Common myeloid progenitor, CD34-positive (primary cell): ENCODE measurements at regions of chr2 and their contacts with region 1.

Region 1: GRCh38 chr2:69565431-69565839 is 78.1 kb downstream of the AAK1 start:
- DNase-seq: peak; percentile 61 to 66 (median 64)
- H3K4me3 ChIP-seq: no peak overlapping the region
- H3K27ac ChIP-seq: no peak overlapping the region
- H3K4me1 ChIP-seq: peaks cover 3 to 16% (median 10%) of the 10 kb centered on the region in 4 experiments
- H3K27me3 ChIP-seq: no peaks in the 10 kb centered on the region

Region 2: GRCh38 chr2:69222953-69223658 is 342.3 kb before region 1 on chr2:
- CTCF ChIA-PET with region 1: no interaction called
- POLR2A ChIA-PET with region 1: no interaction called
- DNase-seq: no peak
- H3K4me3 ChIP-seq: no peak overlapping the region
- H3K27ac ChIP-seq: no peak overlapping the region
- H3K4me1 ChIP-seq: peaks cover 0 to 6% (median 0%) of the 10 kb centered on the region in 4 experiments
- H3K27me3 ChIP-seq: peaks cover 0 to 2% (median 0%) of the 10 kb centered on the region in 5 experiments

Region 3: DNA sequence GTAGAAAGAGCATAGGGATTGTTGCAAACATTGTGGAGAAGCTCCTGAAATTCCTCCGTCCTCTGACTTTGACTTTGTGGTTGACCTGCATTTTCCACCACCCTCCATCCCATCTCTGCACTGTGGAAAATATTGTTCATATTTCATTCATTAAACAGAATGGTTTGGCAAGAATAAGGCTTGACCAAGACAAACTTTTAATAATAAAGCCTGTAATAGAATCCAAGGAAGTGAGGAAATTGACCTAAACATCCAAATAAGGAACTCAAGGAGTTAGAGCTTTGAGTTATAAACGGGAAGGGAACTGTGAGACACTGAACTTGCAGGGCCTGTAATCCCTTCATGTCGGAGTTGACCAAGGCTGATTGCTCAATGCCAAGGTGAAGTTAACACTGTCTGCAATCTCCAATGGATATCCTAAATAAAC is 293.6 kb before region 1 on chr2:
- CTCF ChIA-PET with region 1: no interaction called
- POLR2A ChIA-PET with region 1: no interaction called
- DNase-seq: no peak
- H3K4me3 ChIP-seq: no peak overlapping the region
- H3K27ac ChIP-seq: no peak overlapping the region
- H3K4me1 ChIP-seq: peaks cover 0 to 18% (median 0%) of the 10 kb centered on the region in 4 experiments
- H3K27me3 ChIP-seq: peaks cover 0 to 2% (median 0%) of the 10 kb centered on the region in 5 experiments

Region 4: DNA sequence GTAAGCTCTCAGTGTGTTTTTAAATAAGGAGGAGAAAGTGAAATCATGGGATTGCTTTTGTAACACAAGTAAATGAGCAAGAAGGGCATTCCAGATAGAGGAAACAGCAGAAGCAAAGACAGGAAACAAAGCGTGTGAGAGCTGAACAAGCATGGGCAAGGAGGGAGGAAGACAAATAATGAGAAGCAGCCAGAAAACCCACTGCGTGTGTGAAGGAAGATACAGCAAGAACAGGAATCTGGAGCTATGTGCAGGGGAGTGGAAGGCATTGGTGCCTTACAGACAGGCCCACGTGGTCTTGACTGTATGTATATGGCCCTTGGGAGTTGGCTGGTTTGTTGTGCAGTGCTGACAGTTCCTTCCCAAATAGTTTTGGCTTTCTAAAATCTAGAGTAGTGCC is 10.5 kb before region 1 on chr2:
- CTCF ChIA-PET with region 1: interaction called, 17 read pairs
- POLR2A ChIA-PET with region 1: no interaction called
- DNase-seq: peak; percentile 17 to 69 (median 62)
- H3K4me3 ChIP-seq: peak overlapping the region in 1 of 7 experiments; percentile 12
- H3K27ac ChIP-seq: peak overlapping the region in 1 of 2 experiments; percentile 27
- H3K4me1 ChIP-seq: peaks cover 0 to 12% (median 9%) of the 10 kb centered on the region in 4 experiments
- H3K27me3 ChIP-seq: no peaks in the 10 kb centered on the region

Region 5: DNA sequence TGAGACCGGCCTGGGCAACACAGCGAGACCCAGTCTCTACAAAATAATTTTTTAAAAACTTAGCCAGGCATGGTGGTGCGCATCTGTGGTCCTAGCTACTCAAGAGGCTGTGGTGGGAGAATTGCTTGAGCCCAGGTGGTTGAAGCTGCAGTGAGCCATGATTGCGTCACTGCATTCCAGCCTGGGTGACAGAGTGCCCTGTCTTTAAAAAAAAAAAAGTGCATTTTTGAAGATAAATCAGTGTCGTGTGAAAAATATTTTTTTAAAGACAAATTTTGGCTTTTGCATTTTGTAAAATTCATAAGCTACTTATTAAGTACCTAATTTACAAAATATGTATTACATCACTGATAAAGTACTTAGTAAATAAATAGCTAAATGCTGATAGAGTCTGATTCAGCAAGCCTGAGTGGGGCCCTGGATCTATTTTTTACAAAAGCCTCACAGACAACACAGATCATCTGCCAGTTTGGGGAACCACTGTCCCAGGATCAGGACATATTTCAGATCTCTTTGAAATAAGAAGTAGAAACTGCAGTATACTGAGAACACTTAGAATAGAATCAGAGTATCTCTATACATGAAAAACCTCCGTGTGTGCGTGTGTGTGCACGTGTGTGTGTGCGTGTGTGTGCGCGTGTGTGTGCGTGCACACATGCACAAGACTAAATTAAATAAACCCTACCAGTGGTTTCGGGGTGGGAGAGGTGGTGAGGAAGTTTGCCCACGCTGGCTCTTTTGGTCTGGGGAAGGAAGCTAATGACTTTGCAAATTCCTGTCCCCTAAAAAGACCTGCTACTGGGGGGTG is 16.5 kb after region 1 on chr2:
- CTCF ChIA-PET with region 1: interaction called, 125 read pairs
- POLR2A ChIA-PET with region 1: interaction called, 7 read pairs
- DNase-seq: peak; percentile 84 to 95 (median 92)
- H3K4me3 ChIP-seq: peak overlapping the region in 5 of 7 experiments; percentile 13 to 70 (median 58)
- H3K27ac ChIP-seq: peak overlapping the region in 1 of 2 experiments; percentile 69
- H3K4me1 ChIP-seq: peaks cover 24 to 75% (median 47%) of the 10 kb centered on the region in 4 experiments
- H3K27me3 ChIP-seq: no peaks in the 10 kb centered on the region

Region 6: GRCh38 chr2:69589973-69590652 is 24.7 kb after region 1 on chr2:
- CTCF ChIA-PET with region 1: interaction called, 125 read pairs
- POLR2A ChIA-PET with region 1: no interaction called
- DNase-seq: peak in 2 of 3 donors; percentile 21 to 63
- H3K4me3 ChIP-seq: no peak overlapping the region
- H3K27ac ChIP-seq: peak overlapping the region in 1 of 2 experiments; percentile 58
- H3K4me1 ChIP-seq: peaks cover 0 to 9% (median 4%) of the 10 kb centered on the region in 4 experiments
- H3K27me3 ChIP-seq: no peaks in the 10 kb centered on the region

Region 7: DNA sequence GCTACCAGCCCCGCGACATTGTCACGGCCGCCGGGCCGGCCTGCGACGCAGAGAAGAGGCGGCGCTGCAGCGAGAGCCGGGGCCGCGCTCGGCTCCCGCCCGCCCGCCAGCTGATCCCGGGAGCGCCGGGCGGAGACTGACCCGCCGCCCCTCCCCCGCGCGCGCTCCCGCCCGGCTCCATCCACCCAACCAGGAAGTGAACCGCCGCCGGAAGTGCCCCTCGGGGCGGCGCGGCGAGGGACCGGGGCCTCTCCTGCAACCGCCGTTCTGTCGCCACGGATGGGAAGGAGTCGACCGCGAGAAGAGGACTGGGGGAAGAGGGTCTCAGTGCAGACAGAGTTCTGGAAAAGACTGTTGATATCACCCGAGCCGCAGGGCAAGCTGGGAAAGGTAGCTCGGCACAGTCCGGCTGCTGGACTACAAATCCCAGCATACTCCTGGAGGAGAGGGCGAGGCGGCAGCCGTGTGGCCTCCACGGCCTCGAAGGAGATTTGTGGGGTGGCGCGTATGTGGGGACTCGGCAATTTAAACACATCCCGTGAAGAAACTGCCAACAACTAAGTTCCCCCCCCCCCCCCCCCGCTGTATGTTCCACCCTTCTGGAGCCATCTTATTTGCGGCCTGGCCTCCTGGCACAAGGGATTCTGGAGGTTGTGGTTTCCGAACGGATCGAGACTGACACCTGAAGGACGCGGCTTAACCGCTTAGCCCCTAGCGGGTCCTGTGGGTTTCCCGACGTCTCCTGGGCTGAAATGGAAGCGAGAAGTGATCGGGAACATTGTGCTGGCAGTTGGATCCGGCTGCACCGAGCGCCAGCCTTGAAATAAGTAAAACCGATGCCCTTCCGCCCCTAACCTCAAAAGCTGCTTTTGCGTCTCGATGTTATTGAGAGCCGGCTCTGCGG is 78.4 kb after region 1 on chr2 and contains the start of gene AAK1:
- CTCF ChIA-PET with region 1: interaction called, 13 read pairs
- POLR2A ChIA-PET with region 1: no interaction called
- DNase-seq: peak; percentile 86 to 94 (median 90)
- H3K4me3 ChIP-seq: peak within 1 kb of the TSS; percentile 71 to 98 (median 85)
- H3K27ac ChIP-seq: peak within 1 kb of the TSS; percentile 58 to 84
- H3K4me1 ChIP-seq: peaks cover 18 to 64% (median 39%) of the 10 kb centered on the region in 4 experiments
- H3K27me3 ChIP-seq: no peaks in the 10 kb centered on the region

Region 8: DNA sequence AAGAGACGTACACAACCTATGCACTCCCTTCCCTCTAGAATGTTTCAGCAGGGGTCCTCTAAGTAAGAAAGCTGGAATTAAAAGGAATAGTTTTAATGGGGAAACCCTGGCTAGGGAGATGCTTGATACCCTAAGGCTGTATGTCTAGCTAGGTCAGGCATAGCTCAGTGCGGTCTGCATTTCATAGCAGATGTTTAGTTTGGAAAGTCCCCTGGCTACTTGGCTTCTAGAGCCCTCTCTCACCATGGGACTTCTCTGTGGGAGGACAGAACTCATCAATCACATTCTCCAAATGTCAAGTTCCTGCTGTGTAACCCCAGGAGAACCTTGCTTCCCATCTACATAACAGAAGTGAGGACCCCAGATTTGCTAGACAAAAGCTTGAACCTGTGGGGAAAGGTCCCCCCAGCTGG is 152.4 kb after region 1 on chr2:
- CTCF ChIA-PET with region 1: interaction called, 153 read pairs
- POLR2A ChIA-PET with region 1: no interaction called
- DNase-seq: no peak
- H3K4me3 ChIP-seq: no peak overlapping the region
- H3K27ac ChIP-seq: no peak overlapping the region
- H3K4me1 ChIP-seq: peaks cover 0 to 3% (median 1%) of the 10 kb centered on the region in 4 experiments
- H3K27me3 ChIP-seq: no peaks in the 10 kb centered on the region

Region 9: DNA sequence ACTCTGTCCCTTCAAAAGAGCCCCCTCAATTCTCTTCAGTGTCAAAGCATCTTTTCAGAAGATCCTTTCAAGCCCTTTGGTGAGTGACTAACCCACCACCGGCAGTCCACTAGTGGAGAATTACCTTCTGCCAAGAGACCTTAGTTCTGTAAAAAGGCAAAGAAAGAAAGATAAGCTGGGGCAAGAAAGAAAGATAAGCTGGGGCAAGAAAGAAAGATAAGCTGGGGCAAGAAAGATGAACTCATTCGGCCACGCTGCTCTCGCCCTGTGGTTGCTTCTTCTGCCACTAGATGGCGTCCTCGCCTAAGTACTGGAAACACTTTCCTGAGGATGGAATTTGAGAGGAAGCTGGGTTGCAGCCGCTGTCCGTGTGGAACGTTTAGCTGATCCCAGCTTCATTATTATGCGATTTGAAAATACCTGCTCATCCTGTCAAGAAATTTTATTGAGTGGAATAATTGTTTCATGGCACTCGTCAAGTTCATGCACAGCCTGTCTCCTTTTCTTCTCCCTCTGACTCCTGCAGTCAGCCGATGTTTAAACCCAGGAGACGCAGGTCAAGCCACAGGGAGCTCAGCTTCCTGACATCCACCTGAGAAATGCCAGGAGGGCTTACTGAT is 159.2 kb after region 1 on chr2:
- CTCF ChIA-PET with region 1: interaction called, 153 read pairs
- POLR2A ChIA-PET with region 1: no interaction called
- DNase-seq: peak; percentile 71 to 86 (median 77)
- H3K4me3 ChIP-seq: peak overlapping the region in 6 of 7 experiments; percentile 55 to 69 (median 59)
- H3K27ac ChIP-seq: no peak overlapping the region
- H3K4me1 ChIP-seq: peaks cover 0 to 8% (median 2%) of the 10 kb centered on the region in 4 experiments
- H3K27me3 ChIP-seq: no peaks in the 10 kb centered on the region

Region 10: DNA sequence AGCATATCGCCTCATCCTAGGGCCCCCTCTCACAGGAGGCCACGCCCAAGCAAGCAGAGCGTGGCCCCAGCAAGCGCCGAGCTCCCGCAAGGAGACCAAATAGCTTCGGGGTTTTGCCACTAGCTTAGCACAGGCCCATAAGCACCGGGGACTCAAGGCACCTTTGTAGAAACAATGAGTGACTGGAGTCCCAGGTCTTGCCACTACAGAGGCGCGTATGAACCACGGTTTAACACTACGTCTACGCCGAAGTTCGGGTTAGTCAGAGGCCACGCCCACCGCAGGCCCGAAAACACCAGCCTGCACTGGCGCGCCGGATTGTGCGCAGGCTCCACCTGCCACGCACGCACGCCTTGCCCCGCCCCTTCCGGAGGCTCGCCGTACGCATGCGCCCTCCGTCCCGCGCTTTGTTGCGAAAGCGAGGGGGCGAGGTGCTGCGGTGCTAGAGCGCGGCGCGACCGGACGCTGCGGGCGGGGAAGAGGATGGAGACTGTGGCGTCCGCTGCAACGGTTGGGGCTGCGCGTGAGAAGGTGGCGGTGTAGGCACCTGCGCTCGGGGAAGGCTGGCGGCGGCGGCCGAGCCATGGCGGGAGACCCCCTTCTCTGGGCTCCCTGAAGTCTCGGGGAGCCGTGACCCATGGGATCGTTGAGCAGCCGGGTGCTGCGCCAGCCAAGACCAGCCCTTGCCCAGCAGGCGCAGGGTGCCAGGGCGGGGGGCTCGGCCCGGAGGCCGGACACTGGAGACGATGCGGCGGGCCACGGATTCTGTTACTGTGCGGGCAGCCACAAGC is 264.0 kb after region 1 on chr2 and contains the start of gene GMCL1:
- CTCF ChIA-PET with region 1: no interaction called
- POLR2A ChIA-PET with region 1: no interaction called
- DNase-seq: peak; percentile 96 to 99 (median 99)
- H3K4me3 ChIP-seq: peak within 1 kb of the TSS; percentile 63 to 97 (median 90)
- H3K27ac ChIP-seq: peak within 1 kb of the TSS; percentile 90 to 94
- H3K4me1 ChIP-seq: peaks cover 8 to 33% (median 26%) of the 10 kb centered on the region in 4 experiments
- H3K27me3 ChIP-seq: no peaks in the 10 kb centered on the region